H1 (cell line): ENCODE measurements at regions of chr19 and their contacts with region 1.

Region 1: DNA sequence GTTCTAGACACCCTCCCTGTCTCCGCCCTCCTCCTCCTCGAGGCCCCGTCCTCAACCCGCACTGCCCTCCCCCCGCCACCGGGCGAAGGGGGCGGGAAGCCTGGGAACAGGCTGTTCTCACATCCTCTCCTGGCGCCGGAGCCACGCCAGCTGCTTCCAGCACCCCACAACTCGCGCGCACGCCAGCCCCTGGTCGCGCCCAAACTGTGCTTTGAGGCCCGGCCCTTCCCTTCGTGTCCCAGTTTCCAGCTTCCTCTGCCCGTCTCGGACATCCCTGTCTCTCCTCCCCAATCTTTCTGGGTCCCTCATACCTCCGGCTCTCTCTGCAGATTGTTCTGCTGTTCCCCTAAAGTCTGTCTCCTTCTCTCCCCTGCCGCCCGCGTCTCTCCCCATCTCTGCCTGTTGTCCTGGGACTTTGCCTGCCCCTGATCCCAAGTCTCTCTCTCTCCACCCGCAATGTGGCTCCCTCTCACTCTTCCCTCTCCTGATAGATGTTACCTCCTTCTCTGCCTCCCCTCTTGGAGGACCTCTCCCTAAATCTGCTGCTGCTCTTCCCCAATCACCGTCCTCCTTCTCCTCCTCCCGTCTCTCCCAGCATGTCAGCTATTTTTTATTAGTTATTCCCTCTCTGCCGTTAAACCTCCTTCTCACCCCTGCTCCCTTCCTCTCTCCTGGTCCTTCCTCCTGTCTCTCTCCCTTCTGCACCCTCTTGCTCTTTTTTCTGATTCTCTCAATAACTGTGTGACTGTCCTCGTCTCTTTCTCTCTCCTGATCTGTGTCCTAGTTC is 14.2 kb downstream of the DPF1 start:
- DNase-seq: peak in 1 of 2 experiments; percentile 77
- H3K4me3 ChIP-seq: peak overlapping the region; percentile 41 to 63 (median 56)
- H3K27ac ChIP-seq: peak overlapping the region; percentile 28
- H3K4me1 ChIP-seq: peaks cover 0 to 20% (median 13%) of the 10 kb centered on the region in 4 experiments; a peak in 6 of 7 replicates
- H3K27me3 ChIP-seq: no peaks in the 10 kb centered on the region
- CTCF ChIP-seq: no peak
- EP300 ChIP-seq: no peak
- POLR2A ChIP-seq: peak in 1 of 2 experiments; percentile 10; a peak in 1 of 3 replicates
- RAD21 ChIP-seq: no peak; a peak in 1 of 4 replicates

Region 2: GRCh38 chr19:38183251-38183897 is 26.5 kb before region 1 on chr19:
- CTCF ChIA-PET with region 1: interaction called, 9 read pairs
- POLR2A ChIA-PET with region 1: interaction called, 29 read pairs
- DNase-seq: peak; percentile 27 to 93
- H3K4me3 ChIP-seq: peak overlapping the region; percentile 18 to 62 (median 55); a peak in 7 of 8 replicates
- H3K27ac ChIP-seq: no peak overlapping the region
- H3K4me1 ChIP-seq: peaks cover 0 to 13% (median 7%) of the 10 kb centered on the region in 4 experiments; a peak in 6 of 7 replicates
- H3K27me3 ChIP-seq: no peaks in the 10 kb centered on the region
- CTCF ChIP-seq: no peak
- EP300 ChIP-seq: no peak
- POLR2A ChIP-seq: 0 out of 3 replicates have a peak, but pooled peaks of 1 of the 2 experiments have one; percentile 20
- RAD21 ChIP-seq: no peak; a peak in 1 of 4 replicates

Region 3: DNA sequence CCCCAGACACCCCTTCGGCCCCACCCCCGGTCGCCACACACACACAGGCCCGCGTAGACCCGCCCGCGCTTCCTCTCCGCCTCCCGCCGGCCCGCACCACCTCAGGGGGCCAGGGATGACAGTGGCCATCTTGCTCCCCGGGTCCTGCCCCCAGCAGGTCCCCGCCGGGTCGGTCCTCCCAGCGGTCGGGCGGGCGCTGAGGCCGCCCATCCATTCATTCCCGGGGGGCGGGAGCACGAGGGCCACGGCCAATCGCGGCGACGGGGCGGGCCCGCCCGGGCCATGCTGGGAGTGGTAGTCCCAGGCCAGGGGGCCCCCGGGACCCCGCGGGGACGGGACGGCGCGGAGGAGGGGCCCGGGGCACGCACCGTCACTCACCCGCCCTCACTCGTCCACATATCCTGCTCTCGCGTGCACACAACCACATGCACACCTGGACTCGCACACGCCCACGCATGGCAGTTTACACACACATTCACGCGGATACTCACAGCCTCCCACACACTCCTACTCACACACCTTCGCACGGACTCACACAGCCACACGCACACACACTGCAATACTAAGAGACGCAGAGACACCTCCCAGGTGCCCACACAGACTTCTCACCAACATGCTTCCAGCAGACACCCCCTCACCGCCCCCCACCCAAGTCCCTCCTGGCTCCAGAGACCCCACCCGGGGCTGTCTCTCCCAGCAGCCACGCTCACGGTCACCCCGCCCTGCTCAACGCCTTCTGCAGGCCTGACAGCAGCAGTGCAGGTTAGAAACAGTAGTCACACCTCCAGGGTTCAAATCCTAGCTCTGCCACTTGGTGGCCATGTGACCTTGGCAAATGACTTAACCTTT is 14.4 kb after region 1 on chr19 and contains the start of gene DPF1:
- CTCF ChIA-PET with region 1: interaction called, 13 read pairs
- POLR2A ChIA-PET with region 1: interaction called, 5 read pairs
- DNase-seq: peak in 1 of 2 experiments; percentile 94
- H3K4me3 ChIP-seq: peak within 1 kb of the TSS; percentile 44 to 74 (median 52)
- H3K27ac ChIP-seq: no peak within 1 kb of the TSS
- H3K4me1 ChIP-seq: peaks cover 6 to 17% (median 14%) of the 10 kb centered on the region in 4 experiments
- H3K27me3 ChIP-seq: peaks cover 0 to 8% (median 4%) of the 10 kb centered on the region in 4 experiments; a peak in 3 of 7 replicates
- CTCF ChIP-seq: peak; percentile 62 to 66 (median 63)
- EP300 ChIP-seq: no peak
- POLR2A ChIP-seq: no peak
- RAD21 ChIP-seq: peak; percentile 20 to 50; a peak in 3 of 4 replicates
- total RNA-seq, gene DPF1: 15.2 and 15.6 TPM in 2 replicates